Lower leg skin (tissue), 4 donors: ENCODE measurements at regions of chr14 and their contacts with region 1.

Region 1: DNA sequence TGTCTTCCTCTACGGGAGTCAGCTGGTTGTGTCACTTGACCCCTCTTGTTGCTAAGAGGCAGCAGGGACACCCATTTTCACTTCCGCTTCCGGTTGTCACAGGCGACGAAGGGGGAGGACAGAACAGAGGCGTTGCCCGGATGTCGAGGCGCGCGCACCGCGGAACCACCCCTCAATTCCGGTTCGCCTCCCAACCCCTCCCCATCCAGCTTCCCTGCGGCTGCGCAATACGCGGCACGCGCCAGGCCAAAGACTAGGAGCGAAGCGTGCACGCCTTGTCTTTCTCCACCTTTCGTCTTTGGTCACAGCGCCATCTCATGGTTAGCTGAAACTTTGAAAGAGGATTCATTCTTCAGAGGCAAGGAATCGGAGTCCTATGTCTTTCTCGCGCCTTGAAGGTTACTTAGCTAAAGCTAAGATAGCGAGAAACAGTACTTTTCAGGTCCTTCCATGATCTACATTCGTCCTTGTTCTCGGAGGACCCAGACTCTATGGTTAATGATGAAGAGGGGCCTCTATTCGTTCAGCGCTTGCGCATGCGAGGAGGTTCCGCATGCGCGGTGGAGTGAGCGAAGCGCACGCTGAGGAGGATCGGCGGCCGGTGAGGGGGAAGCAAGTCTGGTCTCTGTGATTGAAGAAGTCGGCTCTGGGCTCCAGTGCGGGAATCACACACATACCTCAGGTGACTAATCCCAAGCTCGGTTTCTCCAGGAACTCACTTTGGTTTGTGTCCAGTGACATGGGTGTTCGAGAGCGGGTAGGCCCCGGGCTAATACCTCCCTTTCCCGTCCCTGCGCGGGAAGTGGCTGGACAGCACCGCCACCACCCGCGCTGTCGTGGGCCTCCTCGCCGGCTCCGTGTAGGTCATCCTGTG is at the starts of genes ATP6V1D and EIF2S1:
- DNase-seq: peak; percentile 99 to 100
- H3K4me3 ChIP-seq: peak within 1 kb of the TSS; percentile 73
- CTCF ChIP-seq: peak in 2 of 3 donors; percentile 27 to 100
- POLR2A ChIP-seq: peak in 1 of 2 donors; percentile 59
- total RNA-seq, gene ATP6V1D: 64.9 to 80.0 (median 74.7) TPM
- total RNA-seq, gene EIF2S1: 72.3 to 113 (median 96.4) TPM

Region 2: GRCh38 chr14:65412032-65412846 is 1947.8 kb before region 1 on chr14 and contains the start of gene FUT8:
- intact Hi-C with region 1: loop called (anchors 10 kb)
- DNase-seq: peak; percentile 92 to 98
- H3K4me3 ChIP-seq: peak within 1 kb of the TSS; percentile 96
- CTCF ChIP-seq: no peak
- POLR2A ChIP-seq: no peak
- total RNA-seq, gene FUT8: 17.9 to 28.0 (median 25.2) TPM

Region 3: DNA sequence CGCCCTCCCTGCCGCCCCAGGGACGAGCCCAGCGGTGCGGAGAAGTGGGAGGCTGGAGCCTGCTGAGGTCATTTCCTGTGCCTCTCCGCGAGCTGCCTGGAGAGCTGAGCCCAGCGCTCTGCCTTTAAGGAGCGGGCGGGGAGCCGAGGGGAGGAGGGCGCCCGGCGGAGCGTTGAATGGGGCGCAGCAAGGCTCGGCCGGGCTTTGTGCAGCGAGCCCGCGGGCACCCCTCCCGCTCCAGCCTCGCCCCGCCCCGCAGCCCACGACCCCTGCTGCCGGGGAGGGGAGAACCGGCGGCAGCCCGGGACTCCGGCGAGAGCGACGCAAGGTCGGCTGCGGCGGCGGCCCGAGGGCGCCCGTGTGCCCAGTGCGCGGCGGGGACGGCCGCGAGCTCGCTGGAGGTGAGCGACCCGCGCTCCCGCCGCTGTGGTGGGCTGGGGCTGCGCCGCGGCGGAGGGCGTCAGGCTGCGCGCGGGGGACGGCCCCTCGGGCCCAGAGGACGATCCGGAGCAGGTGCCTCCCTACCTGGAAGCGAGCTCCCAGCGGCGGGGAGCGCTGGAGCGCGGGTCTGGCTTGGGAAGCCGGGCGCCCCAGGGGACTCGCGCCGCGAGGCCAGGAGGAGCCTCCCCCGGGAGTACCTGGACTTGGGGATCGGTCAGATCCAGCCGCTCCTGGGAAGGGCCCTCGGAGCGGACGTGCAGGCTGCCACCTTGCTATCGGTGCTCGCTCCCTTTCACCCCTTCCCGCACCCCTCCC is 173.2 kb after region 1 on chr14 and contains the start of gene PLEKHH1:
- intact Hi-C with region 1: no loop called
- DNase-seq: peak; percentile 57 to 91
- H3K4me3 ChIP-seq: peak within 1 kb of the TSS; percentile 44
- CTCF ChIP-seq: no peak
- POLR2A ChIP-seq: no peak
- total RNA-seq, gene PLEKHH1: 10.5 to 23.1 (median 17.2) TPM

Region 4: GRCh38 chr14:68951042-68951914 is 1591.3 kb after region 1 on chr14:
- intact Hi-C with region 1: no loop called
- DNase-seq: peak; percentile 95 to 98
- H3K4me3 ChIP-seq: no peak overlapping the region
- CTCF ChIP-seq: no peak
- POLR2A ChIP-seq: no peak